Heart left ventricle (tissue), 16 donors: ENCODE measurements at regions of chr22 and their contacts with region 1.

Region 1: GRCh38 chr22:18091916-18092526 is 14.2 kb downstream of the PEX26 start:
- DNase-seq: peak; percentile 72 to 87 (median 83)
- ATAC-seq: peak; percentile 65 to 88 (median 84)
- H3K4me3 ChIP-seq: peak overlapping the region in 11 of 12 donors; percentile 6 to 46 (median 42)
- H3K27ac ChIP-seq: peak overlapping the region; percentile 87 to 97 (median 92)
- H3K4me1 ChIP-seq: peaks cover 2 to 40% (median 19%) of the 10 kb centered on the region in 12 donors
- H3K27me3 ChIP-seq: no peaks in the 10 kb centered on the region
- CTCF ChIP-seq: peak in 5 of 12 donors; percentile 6 to 33 (median 25)
- POLR2A ChIP-seq: peak in 1 of 2 donors; percentile 14

Region 2: DNA sequence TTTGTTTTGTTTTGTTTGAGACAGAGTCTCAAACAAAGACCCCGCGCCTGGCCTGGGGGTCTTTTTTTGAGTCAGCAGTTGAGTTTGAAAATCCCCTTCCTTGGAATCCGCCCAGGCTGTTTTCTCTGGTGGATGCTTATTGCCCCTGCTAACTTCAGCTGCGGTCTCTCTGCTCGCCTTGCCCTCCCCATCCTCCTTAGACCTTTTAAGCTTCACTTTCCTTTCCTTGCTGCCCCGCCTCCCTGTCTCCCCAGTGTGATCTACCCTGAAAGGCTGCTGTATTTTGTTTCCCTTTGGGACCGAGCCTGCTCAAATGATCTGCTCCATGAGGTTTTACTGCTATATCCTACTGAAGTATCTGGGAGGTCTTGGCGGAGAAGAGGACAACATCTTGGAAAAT is 60.5 kb after region 1 on chr22:
- intact Hi-C with region 1: loop called in 2 of 10 experiments (anchors 1 to 2 kb)
- DNase-seq: no peak
- ATAC-seq: no peak
- H3K4me3 ChIP-seq: no peak overlapping the region
- H3K27ac ChIP-seq: peak overlapping the region in 1 of 12 donors; percentile 36
- H3K4me1 ChIP-seq: peaks cover 0 to 41% (median 6%) of the 10 kb centered on the region in 12 donors
- H3K27me3 ChIP-seq: no peaks in the 10 kb centered on the region
- CTCF ChIP-seq: no peak
- POLR2A ChIP-seq: no peak